Heart left ventricle (tissue), 16 donors: ENCODE measurements at regions of chr17 and their contacts with region 1.

Region 1: DNA sequence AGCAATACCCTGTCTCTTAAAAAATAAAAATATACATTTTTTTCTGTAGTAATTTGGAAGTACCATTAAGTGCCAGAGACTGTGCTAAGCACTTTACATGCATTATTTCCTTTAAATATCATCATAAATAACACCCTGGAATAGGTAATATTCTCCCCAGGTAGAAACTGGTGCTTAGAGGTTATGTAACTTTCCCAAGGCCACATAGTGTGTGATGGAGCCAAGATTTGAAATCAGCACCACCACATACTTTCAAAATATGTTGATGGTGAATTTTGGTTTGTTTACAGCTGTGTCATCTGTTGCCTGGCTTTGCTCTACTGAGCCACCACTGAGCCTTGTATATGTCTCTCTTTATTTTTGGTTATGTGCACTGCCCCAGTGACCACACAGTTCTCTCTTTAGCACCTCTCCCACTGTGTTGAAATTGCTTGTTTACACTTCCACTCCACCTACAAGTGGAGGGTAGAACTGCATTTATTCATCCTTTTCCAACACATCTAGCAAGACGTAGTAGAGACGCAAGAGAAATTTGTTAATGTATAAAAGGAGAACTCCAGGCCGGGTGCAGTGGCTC is 19.0 kb upstream of the NBR1 start:
- DNase-seq: no peak
- ATAC-seq: no peak
- H3K4me3 ChIP-seq: no peak overlapping the region
- H3K27ac ChIP-seq: no peak overlapping the region
- H3K4me1 ChIP-seq: no peaks in the 10 kb centered on the region
- H3K27me3 ChIP-seq: no peaks in the 10 kb centered on the region
- CTCF ChIP-seq: no peak
- POLR2A ChIP-seq: no peak

Region 2: GRCh38 chr17:42629411-42630009 is 522.5 kb before region 1 on chr17:
- intact Hi-C with region 1: loop called in 1 of 10 experiments (anchors 10 kb)
- DNase-seq: no peak
- ATAC-seq: no peak
- H3K4me3 ChIP-seq: no peak overlapping the region
- H3K27ac ChIP-seq: no peak overlapping the region
- H3K4me1 ChIP-seq: no peaks in the 10 kb centered on the region
- H3K27me3 ChIP-seq: no peaks in the 10 kb centered on the region
- CTCF ChIP-seq: no peak
- POLR2A ChIP-seq: no peak

Region 3: GRCh38 chr17:43018008-43018853 is 133.7 kb before region 1 on chr17:
- intact Hi-C with region 1: loop called in 1 of 10 experiments (anchors 10 kb)
- DNase-seq: no peak
- ATAC-seq: no peak
- H3K4me3 ChIP-seq: no peak overlapping the region
- H3K27ac ChIP-seq: peak overlapping the region in 7 of 12 donors; percentile 3 to 95 (median 91)
- H3K4me1 ChIP-seq: peaks cover 6 to 76% (median 63%) of the 10 kb centered on the region in 12 donors
- H3K27me3 ChIP-seq: no peaks in the 10 kb centered on the region
- CTCF ChIP-seq: no peak
- POLR2A ChIP-seq: no peak

Region 4: GRCh38 chr17:43118679-43119615 is 33.0 kb before region 1 on chr17:
- intact Hi-C with region 1: no loop called
- DNase-seq: no peak
- ATAC-seq: no peak
- H3K4me3 ChIP-seq: no peak overlapping the region
- H3K27ac ChIP-seq: no peak overlapping the region
- H3K4me1 ChIP-seq: no peaks in the 10 kb centered on the region
- H3K27me3 ChIP-seq: no peaks in the 10 kb centered on the region
- CTCF ChIP-seq: no peak
- POLR2A ChIP-seq: no peak

Region 5: DNA sequence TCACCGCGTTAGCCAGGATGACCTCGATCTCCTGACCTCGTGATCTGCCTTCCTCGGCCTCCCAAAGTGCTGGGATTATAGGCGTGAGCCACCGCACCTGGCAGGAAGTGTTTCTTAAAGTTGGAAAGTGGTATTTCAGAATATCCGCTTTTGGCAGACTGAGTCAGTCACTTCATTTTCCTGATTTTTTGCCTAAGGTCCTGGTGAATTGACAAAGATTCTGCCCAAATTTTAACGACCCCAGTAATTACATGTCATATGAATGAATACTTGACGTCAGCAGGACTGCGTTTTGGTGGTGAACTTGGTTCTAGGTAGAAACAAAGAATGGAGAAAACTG is 22.3 kb before region 1 on chr17:
- intact Hi-C with region 1: no loop called
- DNase-seq: no peak
- ATAC-seq: no peak
- H3K4me3 ChIP-seq: peak overlapping the region in 6 of 12 donors; percentile 9 to 30 (median 12)
- H3K27ac ChIP-seq: peak overlapping the region in 10 of 12 donors; percentile 3 to 67 (median 44)
- H3K4me1 ChIP-seq: peaks cover 0 to 25% (median 7%) of the 10 kb centered on the region in 12 donors
- H3K27me3 ChIP-seq: no peaks in the 10 kb centered on the region
- CTCF ChIP-seq: no peak
- POLR2A ChIP-seq: no peak